ENCODE measurements at regions of chr11 and their contacts with region 1.

Region 1: GRCh38 chr11:64204464-64204989 is 2.0 kb upstream of the FERMT3 start:
- DNase-seq: peak; percentile 85 to 90 (median 86)
- H3K4me3 ChIP-seq: no peak overlapping the region
- H3K4me3 Mint-ChIP-seq: peak overlapping the region; percentile 62 to 89 (median 82)
- H3K27ac ChIP-seq: no peak overlapping the region
- H3K27ac Mint-ChIP-seq: peak overlapping the region; percentile 85 to 97 (median 94)
- H3K4me1 ChIP-seq: peaks cover 44% of the 10 kb centered on the region
- H3K4me1 Mint-ChIP-seq: peaks cover 16 to 64% (median 39%) of the 10 kb centered on the region in 4 donors
- H3K27me3 ChIP-seq: no peaks in the 10 kb centered on the region
- H3K27me3 Mint-ChIP-seq: no peaks in the 10 kb centered on the region

Region 2: DNA sequence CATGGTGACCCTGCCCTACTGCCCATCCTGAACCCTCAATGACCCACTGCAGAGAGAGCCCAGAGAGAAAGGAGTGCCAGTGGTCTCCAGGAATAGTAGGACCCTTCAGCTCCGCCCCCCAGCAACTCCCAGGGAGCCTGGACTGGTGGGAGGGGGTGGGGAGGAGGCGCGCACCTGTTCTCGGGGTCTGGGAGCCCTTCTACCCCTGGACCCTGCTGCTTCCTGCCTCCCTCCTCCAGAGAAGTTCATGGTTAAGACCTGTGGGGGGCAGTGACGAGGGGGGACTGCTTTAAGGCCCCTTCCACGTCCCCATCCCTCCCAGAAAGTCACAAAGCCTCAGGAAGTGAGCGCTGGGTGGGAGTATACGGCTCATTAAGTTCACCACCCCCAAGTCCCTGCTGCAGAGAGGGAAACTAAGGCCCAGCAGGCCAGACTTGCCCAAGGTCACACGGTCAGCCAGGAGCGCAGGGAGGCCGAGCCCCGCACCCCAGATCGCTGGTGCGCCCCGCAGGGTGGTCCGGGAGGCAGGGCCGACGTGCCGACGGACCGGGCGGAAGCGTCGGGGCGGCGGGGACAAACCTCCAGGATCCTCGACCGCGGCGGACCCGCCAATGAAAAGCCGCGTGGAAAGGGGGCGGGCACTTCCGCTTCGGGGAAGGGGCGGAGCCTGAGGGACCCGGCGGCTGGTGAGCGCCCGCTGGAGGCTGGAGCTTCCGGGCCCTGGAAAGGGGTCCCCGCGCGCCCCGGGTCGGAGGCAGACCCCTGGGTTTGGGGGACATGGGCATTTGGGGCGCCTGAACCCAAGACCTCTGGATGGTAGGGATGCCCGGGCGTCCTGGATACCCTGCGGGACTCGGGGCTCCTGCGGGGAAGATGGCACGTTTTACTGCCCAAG is 21.3 kb after region 1 on chr11 and contains the starts of genes NUDT22 and TRPT1:
- CTCF ChIA-PET with region 1: interaction called, 207 read pairs
- POLR2A ChIA-PET with region 1: interaction called, 937 read pairs
- intact Hi-C with region 1: loop called (anchors 1 kb)
- DNase-seq: peak; percentile 82 to 88 (median 85)
- H3K4me3 ChIP-seq: peak within 1 kb of the TSS; percentile 86 to 94
- H3K4me3 Mint-ChIP-seq: peak within 1 kb of the TSS; percentile 89 to 94 (median 92)
- H3K27ac ChIP-seq: peak within 1 kb of the TSS; percentile 77
- H3K27ac Mint-ChIP-seq: peak within 1 kb of the TSS; percentile 88 to 97 (median 93)
- H3K4me1 ChIP-seq: peaks cover 43% of the 10 kb centered on the region
- H3K4me1 Mint-ChIP-seq: peaks cover 13 to 50% (median 28%) of the 10 kb centered on the region in 4 donors
- H3K27me3 ChIP-seq: no peaks in the 10 kb centered on the region
- H3K27me3 Mint-ChIP-seq: no peaks in the 10 kb centered on the region
- total RNA-seq, gene NUDT22: 83.9 to 101 TPM
- total RNA-seq, gene TRPT1: 37.6 to 42.1 TPM

Region 3: GRCh38 chr11:64240394-64241174 is 36.1 kb after region 1 on chr11 and contains the start of gene FKBP2:
- CTCF ChIA-PET with region 1: interaction called, 78 read pairs
- POLR2A ChIA-PET with region 1: interaction called, 937 read pairs
- intact Hi-C with region 1: loop called (anchors 2 kb)
- DNase-seq: peak; percentile 97 to 99 (median 99)
- H3K4me3 ChIP-seq: peak within 1 kb of the TSS; percentile 67 to 73
- H3K4me3 Mint-ChIP-seq: peak within 1 kb of the TSS; percentile 87 to 97 (median 88)
- H3K27ac ChIP-seq: peak within 1 kb of the TSS; percentile 99
- H3K27ac Mint-ChIP-seq: peak within 1 kb of the TSS; percentile 99 to 100 (median 100)
- H3K4me1 ChIP-seq: peaks cover 38% of the 10 kb centered on the region
- H3K4me1 Mint-ChIP-seq: peaks cover 14 to 52% (median 29%) of the 10 kb centered on the region in 4 donors
- H3K27me3 ChIP-seq: no peaks in the 10 kb centered on the region
- H3K27me3 Mint-ChIP-seq: no peaks in the 10 kb centered on the region
- total RNA-seq, gene FKBP2: 41.4 to 46.4 TPM

Region 4: GRCh38 chr11:64269380-64270234 is 65.1 kb after region 1 on chr11:
- CTCF ChIA-PET with region 1: interaction called, 83 read pairs
- POLR2A ChIA-PET with region 1: interaction called, 175 read pairs
- intact Hi-C with region 1: loop called (anchors 1 kb)
- DNase-seq: peak; percentile 98
- H3K4me3 ChIP-seq: peak overlapping the region; percentile 93 to 98
- H3K4me3 Mint-ChIP-seq: peak overlapping the region; percentile 93 to 100 (median 96)
- H3K27ac ChIP-seq: peak overlapping the region; percentile 93
- H3K27ac Mint-ChIP-seq: peak overlapping the region; percentile 98 to 100 (median 99)
- H3K4me1 ChIP-seq: peaks cover 20% of the 10 kb centered on the region
- H3K4me1 Mint-ChIP-seq: peaks cover 9 to 36% (median 19%) of the 10 kb centered on the region in 4 donors
- H3K27me3 ChIP-seq: no peaks in the 10 kb centered on the region
- H3K27me3 Mint-ChIP-seq: peaks cover 0 to 4% of the 10 kb centered on the region in 2 donors

Region 5: DNA sequence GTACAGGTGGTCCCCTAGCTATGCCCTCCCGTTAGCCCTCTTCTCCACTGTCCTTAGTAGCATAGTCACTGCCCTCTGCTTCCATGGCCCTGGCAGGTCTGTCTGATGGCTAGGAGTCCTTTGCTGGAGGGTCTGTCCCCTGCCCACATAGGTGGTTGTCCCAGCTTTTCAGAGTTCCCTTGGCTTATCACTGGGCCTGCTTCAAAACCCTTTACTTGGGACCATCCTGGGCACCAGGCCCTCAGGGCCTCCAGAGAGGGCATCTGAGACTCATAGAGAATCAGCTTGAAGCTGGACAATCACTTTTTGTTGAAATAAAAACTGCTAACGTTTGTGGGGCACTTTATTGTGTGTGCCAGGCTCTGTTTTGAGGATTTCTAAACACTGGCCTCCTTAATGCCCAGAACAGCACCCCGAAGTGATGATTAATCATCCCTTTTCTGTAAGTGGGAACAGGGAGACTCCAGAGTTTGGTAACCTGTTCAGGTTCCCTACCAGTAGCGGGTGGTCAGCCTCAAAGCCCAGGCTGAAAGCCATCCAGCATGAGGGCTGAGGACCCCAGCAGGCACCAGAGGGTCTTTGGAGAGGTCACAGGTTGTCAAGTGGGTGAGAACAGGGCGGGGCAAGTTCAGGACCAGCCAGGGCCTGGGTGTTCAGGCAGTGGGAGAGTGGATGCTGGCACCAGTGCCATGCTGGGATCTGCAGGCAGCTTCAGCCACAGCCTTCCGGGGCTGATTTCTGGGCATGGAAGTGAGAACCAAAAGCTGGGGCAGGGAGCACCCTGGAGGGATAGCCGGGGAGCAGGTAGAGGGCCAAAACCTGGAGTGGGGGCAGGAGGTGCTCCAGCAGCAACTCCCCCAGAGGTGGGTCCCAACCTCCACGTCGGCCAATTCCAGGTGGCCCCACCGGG is 86.1 kb after region 1 on chr11:
- CTCF ChIA-PET with region 1: interaction called, 34 read pairs
- POLR2A ChIA-PET with region 1: interaction called, 52 read pairs
- intact Hi-C with region 1: no loop called
- DNase-seq: peak in 1 of 5 donors; percentile 32
- H3K4me3 ChIP-seq: no peak overlapping the region
- H3K4me3 Mint-ChIP-seq: peak overlapping the region; percentile 43 to 80 (median 72)
- H3K27ac ChIP-seq: no peak overlapping the region
- H3K27ac Mint-ChIP-seq: peak overlapping the region in 2 of 7 donors; percentile 15 to 35
- H3K4me1 ChIP-seq: peaks cover 19% of the 10 kb centered on the region
- H3K4me1 Mint-ChIP-seq: peaks cover 6 to 22% (median 13%) of the 10 kb centered on the region in 4 donors
- H3K27me3 ChIP-seq: peaks cover 32% of the 10 kb centered on the region
- H3K27me3 Mint-ChIP-seq: peaks cover 22 to 28% of the 10 kb centered on the region in 2 donors

Region 6: GRCh38 chr11:64331557-64332371 is 127.2 kb after region 1 on chr11:
- CTCF ChIA-PET with region 1: interaction called, 25 read pairs
- POLR2A ChIA-PET with region 1: interaction called, 5 read pairs
- intact Hi-C with region 1: loop called (anchors 1 kb)
- DNase-seq: peak; percentile 47 to 73 (median 54)
- H3K4me3 ChIP-seq: no peak overlapping the region
- H3K4me3 Mint-ChIP-seq: peak overlapping the region in 4 of 8 donors; percentile 7 to 38 (median 36)
- H3K27ac ChIP-seq: no peak overlapping the region
- H3K27ac Mint-ChIP-seq: peak overlapping the region; percentile 11 to 92 (median 71)
- H3K4me1 ChIP-seq: peaks cover 12% of the 10 kb centered on the region
- H3K4me1 Mint-ChIP-seq: peaks cover 5 to 11% (median 8%) of the 10 kb centered on the region in 4 donors
- H3K27me3 ChIP-seq: no peaks in the 10 kb centered on the region
- H3K27me3 Mint-ChIP-seq: no peaks in the 10 kb centered on the region